ENCODE measurements at regions of chr18 and their contacts with region 1.

Region 1: DNA sequence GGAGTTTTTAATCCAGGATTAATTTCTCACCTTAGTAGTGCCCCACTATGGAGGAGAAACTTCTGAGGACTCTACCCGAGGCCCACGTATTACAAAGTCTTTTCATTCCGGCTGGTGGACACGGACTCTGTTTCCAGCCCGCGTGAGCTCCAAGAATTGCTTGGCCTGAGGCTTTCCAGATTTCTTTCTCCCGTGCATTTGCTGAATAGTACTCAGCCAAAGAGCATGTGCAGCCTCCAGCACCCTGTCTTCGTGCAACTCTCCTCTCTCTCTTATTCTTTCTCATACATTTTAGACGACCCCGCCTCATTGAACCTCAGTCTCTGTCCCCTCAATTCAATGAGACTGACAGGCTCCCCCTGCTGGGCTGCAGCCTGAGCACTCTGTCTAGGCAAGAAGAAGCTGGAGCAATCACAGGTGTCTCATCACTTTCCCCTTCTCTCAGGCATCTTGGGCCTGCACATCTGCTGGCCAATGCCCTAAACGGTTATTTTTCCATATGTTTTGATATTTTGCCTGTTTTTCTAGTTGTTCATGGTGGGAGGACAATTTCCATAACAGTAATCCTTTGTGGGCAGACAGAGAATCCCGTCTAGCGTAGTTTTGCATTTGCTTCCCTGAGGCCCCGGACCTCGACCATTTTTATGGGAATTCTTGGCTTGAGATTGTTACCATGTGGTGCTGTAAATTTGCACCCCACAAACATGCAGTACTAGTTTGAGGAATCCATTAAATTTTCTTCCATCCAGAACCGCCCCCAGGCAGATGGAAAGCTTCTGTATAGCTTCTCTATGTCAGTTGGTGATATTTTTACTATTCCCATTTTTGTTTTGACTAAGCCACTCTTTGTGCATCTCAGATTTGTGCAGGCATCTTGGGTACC is 50.1 kb upstream of the LPIN2 start:
- DNase-seq: peak; percentile 47 to 76 (median 67)
- ATAC-seq: peak; percentile 59
- H3K4me3 ChIP-seq: peak overlapping the region; percentile 55
- H3K4me3 Mint-ChIP-seq: peak overlapping the region; percentile 56 to 83 (median 77)
- H3K27ac ChIP-seq: peak overlapping the region; percentile 96
- H3K27ac Mint-ChIP-seq: peak overlapping the region; percentile 91 to 99 (median 96)
- H3K4me1 ChIP-seq: peaks cover 60 to 70% of the 10 kb centered on the region in 2 donors
- H3K4me1 Mint-ChIP-seq: peaks cover 46 to 74% (median 71%) of the 10 kb centered on the region in 7 donors
- H3K27me3 ChIP-seq: no peaks in the 10 kb centered on the region
- H3K27me3 Mint-ChIP-seq: no peaks in the 10 kb centered on the region

Region 2: DNA sequence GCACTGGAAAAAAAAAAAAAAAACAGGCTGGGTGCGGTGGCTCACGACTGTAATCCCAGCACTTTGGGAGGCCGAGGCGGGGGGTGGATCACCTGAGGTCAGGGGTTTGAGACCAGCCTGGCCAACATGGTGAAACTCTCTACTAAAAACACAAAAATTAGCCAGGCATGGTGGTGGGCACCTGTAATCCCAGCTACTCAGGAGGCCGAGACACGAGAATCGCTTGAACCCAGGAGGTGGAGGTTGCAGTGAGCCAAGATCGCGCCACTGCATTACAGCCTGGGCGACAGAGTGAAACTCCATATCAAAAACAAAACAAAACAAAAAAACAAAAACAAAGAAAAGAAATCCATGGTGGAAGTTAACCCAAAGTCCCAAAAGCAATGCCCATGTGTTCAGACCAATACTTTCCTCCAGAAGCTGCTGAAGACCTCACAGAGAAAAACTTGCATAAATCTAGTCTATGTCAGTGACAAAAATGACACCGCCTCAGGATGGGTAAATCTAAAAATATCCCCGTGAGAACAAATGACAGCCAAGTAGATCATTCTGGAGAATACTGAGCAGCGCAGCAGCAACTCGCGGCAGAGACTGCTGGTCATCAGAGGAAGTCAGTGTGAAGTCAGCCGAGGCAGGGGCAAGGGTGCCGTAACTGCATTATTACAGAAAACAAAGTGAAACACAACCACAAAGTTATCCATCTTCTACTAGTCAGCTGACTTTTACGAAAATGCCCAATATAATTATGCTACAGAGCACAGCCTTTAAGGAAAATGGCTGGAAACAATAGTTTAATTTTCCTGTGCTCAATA is 91.1 kb before region 1 on chr18:
- CTCF ChIA-PET with region 1: interaction called, 4 read pairs
- POLR2A ChIA-PET with region 1: interaction called, 12 read pairs
- intact Hi-C with region 1: no loop called
- DNase-seq: peak in 7 of 9 donors; percentile 40 to 80 (median 62)
- ATAC-seq: peak; percentile 84
- H3K4me3 ChIP-seq: peak overlapping the region; percentile 45
- H3K4me3 Mint-ChIP-seq: peak overlapping the region; percentile 75 to 93 (median 88)
- H3K27ac ChIP-seq: peak overlapping the region; percentile 76
- H3K27ac Mint-ChIP-seq: peak overlapping the region; percentile 90 to 99 (median 96)
- H3K4me1 ChIP-seq: peaks cover 75 to 82% of the 10 kb centered on the region in 2 donors
- H3K4me1 Mint-ChIP-seq: peaks cover 63 to 97% (median 93%) of the 10 kb centered on the region in 7 donors
- H3K27me3 ChIP-seq: no peaks in the 10 kb centered on the region
- H3K27me3 Mint-ChIP-seq: no peaks in the 10 kb centered on the region

Region 3: DNA sequence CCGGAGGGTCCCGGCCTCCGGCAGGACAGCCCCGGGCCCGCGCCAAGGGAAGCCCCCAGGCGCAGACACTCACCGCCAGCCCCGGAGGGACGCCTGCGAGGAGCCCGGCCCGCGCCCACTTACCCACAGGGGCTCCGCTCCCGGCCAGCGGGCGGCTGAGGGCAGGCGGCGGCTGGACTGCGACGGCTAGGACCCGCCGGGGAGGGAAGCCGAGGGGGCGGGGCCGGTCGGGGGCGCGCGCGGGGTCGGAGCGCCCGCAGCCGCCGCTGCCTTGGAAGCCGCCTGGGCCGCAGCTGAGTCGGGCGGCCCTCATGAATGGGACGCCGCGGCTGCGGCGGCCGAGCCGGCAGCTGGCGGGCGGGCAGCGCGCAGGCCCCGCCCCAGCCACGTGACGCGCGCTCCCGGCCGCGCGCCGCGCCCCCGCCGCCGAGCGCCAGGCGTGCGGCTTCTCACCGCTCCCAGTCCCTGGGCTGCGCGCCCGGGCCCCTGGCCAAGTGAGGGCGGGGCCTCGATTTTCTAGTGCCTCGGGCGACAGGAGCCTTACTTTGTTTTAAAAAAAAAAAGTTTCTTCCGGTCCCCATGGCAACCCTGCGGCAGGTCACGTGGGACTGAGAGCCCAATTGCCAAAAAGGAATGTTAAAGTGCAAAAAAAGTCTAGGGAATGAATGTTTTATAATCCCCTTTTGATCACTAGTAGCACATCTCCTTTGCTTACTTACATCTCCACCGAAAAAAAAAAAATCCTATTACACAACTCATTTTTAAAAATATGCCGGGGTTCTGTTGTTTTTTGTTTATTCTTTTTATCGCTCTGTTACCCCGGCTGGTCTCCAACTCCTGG is 49.9 kb before region 1 on chr18 and contains the start of gene LPIN2:
- CTCF ChIA-PET with region 1: interaction called, 18 read pairs
- POLR2A ChIA-PET with region 1: interaction called, 73 read pairs
- intact Hi-C with region 1: loop called (anchors 1 kb)
- DNase-seq: peak; percentile 96 to 98 (median 98)
- ATAC-seq: peak; percentile 92
- H3K4me3 ChIP-seq: peak within 1 kb of the TSS; percentile 61
- H3K4me3 Mint-ChIP-seq: peak within 1 kb of the TSS; percentile 93 to 99 (median 95)
- H3K27ac ChIP-seq: peak within 1 kb of the TSS; percentile 84
- H3K27ac Mint-ChIP-seq: peak within 1 kb of the TSS; percentile 91 to 98 (median 95)
- H3K4me1 ChIP-seq: peaks cover 8 to 61% of the 10 kb centered on the region in 2 donors
- H3K4me1 Mint-ChIP-seq: peaks cover 56 to 79% (median 74%) of the 10 kb centered on the region in 7 donors
- H3K27me3 ChIP-seq: no peaks in the 10 kb centered on the region
- H3K27me3 Mint-ChIP-seq: no peaks in the 10 kb centered on the region
- total RNA-seq, gene LPIN2: 58.8 to 133 (median 73.6) TPM

Region 4: DNA sequence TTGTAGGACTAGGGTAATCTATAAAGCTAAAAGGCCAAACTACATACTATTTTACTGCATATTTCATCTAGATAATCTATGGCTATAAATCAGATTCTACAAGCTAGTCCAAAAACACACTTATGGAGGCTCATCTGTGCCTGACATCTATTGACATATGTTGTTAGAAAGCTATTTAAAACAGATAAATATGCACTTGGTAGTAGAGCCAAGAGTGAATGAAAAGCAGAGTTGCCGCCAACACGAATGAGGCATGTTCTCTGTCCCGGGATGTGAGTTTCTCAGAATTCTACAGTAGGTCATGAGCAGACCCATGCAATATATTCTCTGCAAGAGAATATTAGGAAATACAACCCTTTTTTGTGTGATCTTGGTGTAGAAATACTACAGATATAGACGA is 16.6 kb after region 1 on chr18:
- CTCF ChIA-PET with region 1: interaction called, 13 read pairs
- POLR2A ChIA-PET with region 1: interaction called, 47 read pairs
- intact Hi-C with region 1: no loop called
- DNase-seq: no peak
- ATAC-seq: no peak
- H3K4me3 ChIP-seq: no peak overlapping the region
- H3K4me3 Mint-ChIP-seq: no peak overlapping the region
- H3K27ac ChIP-seq: no peak overlapping the region
- H3K27ac Mint-ChIP-seq: no peak overlapping the region
- H3K4me1 ChIP-seq: no peaks in the 10 kb centered on the region
- H3K4me1 Mint-ChIP-seq: peaks cover 4 to 16% (median 11%) of the 10 kb centered on the region in 7 donors
- H3K27me3 ChIP-seq: no peaks in the 10 kb centered on the region
- H3K27me3 Mint-ChIP-seq: peaks cover 0 to 3% (median 0%) of the 10 kb centered on the region in 5 donors

Region 5: GRCh38 chr18:3151399-3152264 is 88.6 kb after region 1 on chr18:
- CTCF ChIA-PET with region 1: interaction called, 8 read pairs
- POLR2A ChIA-PET with region 1: no interaction called
- intact Hi-C with region 1: loop called in 1 of 2 experiments (anchors 2 kb)
- DNase-seq: peak in 7 of 9 donors; percentile 12 to 50 (median 31)
- ATAC-seq: peak; percentile 45
- H3K4me3 ChIP-seq: no peak overlapping the region
- H3K4me3 Mint-ChIP-seq: no peak overlapping the region
- H3K27ac ChIP-seq: no peak overlapping the region
- H3K27ac Mint-ChIP-seq: peak overlapping the region in 2 of 9 donors; percentile 23 to 34
- H3K4me1 ChIP-seq: peaks cover 0 to 3% of the 10 kb centered on the region in 2 donors
- H3K4me1 Mint-ChIP-seq: peaks cover 3 to 12% (median 7%) of the 10 kb centered on the region in 7 donors
- H3K27me3 ChIP-seq: no peaks in the 10 kb centered on the region
- H3K27me3 Mint-ChIP-seq: peaks cover 0 to 8% (median 0%) of the 10 kb centered on the region in 5 donors